ENCODE measurements at regions of chr9 and their contacts with region 1.

Region 1: DNA sequence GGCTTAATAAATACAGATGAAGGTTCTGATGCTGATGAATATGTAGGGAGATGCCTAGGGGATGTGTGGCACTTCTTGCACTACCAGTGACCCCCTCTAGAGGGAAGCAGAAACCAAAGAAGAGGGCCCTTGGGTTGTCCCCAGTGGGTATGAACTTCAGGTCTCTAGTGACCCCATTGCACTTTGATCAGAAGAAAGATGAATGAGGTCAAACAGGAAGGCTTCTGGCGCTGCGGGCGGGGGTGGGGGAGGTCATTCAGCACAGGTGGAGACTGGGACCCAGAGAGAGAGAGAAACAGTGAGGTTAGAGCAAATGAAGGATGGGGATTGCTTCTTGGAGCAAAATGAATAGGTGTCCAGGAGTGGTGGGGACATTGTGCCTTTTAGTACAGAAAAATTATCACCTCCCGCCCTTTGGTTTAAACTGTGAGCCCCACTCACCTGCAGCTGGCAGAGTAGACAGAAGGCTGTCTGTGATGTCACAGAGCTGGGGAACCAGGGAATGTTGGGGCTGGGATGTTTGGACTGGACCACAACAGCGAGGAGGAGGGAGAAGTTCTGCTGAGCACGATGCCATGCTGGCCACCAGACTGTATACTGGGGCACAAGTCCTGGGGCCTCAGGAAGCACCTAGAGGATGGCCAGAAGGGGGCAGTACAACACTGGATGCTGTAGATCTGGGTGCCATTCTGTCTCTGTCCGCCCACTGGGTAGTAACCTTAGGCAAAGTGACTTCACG is at the start of gene TEX48:
- DNase-seq: peak in 1 of 2 donors; percentile 61
- ATAC-seq: peak; percentile 69
- H3K4me3 ChIP-seq: no peak within 1 kb of the TSS
- H3K27ac ChIP-seq: no peak within 1 kb of the TSS
- H3K4me1 ChIP-seq: no peaks in the 10 kb centered on the region
- H3K27me3 ChIP-seq: no peaks in the 10 kb centered on the region
- total RNA-seq, gene TEX48: not detected

Region 2: DNA sequence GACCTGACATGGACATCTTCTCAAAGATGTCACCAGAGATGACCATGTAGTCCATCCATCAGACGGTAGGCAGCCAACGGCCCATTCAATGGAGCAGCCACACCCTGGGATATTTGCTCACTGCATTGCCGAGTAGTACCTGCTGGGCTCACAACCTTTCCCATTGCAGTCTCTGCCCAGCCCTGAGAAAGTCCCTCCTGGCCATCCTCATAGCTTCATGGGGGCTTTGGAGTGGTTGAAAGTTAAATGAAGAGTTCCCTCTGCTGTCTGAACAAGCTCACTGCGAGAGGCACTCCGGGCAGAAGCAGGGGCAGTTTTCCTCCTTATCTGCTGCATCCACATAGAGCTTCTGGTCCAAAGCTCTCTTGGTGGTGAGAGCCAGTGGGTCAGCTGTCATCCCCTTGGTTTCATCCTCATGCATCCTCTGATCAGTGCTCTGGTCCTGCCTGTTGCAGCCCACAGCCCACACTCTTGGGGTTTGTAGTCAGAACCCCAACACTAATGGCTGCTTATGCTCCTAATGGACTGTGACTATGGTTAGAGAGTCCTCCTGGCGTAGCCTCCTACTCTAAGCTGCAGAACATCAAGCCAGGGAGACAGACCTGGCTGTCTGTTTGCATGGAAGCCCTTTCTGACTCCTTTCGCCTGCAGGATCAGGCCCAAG is 225.3 kb after region 1 on chr9:
- intact Hi-C with region 1: loop called (anchors 5 to 10 kb)
- DNase-seq: no peak
- ATAC-seq: peak; percentile 60
- H3K4me3 ChIP-seq: no peak overlapping the region
- H3K27ac ChIP-seq: no peak overlapping the region
- H3K4me1 ChIP-seq: no peaks in the 10 kb centered on the region
- H3K27me3 ChIP-seq: no peaks in the 10 kb centered on the region